Heart right ventricle (tissue), 16 donors: ENCODE measurements at regions of chr18 and their contacts with region 1.

Region 1: DNA sequence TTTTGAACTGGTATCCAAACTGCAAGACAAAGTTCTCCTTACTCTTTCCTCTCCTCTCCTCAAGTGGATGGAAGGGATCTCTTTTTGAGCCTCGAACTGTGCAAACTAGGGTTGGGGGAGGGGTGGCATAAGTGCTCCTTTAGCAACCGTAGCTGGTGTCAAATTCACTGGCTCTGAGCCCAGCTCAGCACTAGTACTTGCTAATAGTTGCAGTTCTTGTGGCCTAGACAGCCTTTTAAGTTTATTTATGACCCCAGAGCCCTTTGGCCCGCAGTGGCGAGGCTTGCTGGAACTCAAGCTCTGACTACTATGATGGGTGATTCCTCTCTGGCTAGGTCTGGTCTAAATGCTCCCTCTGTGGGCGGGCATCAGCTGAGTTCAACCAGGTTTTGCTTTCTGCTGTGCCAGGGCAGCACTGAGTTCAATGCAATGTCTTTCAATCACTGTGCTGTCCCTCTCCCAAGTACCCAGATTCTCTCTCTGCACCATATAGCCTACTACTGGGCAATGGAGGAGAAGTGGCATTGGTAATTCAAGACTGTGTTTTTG is 528.4 kb upstream of the SYT4 start:
- DNase-seq: no peak
- ATAC-seq: no peak
- H3K4me3 ChIP-seq: no peak overlapping the region
- H3K27ac ChIP-seq: no peak overlapping the region
- H3K4me1 ChIP-seq: no peaks in the 10 kb centered on the region
- H3K27me3 ChIP-seq: no peaks in the 10 kb centered on the region
- CTCF ChIP-seq: no peak

Region 2: DNA sequence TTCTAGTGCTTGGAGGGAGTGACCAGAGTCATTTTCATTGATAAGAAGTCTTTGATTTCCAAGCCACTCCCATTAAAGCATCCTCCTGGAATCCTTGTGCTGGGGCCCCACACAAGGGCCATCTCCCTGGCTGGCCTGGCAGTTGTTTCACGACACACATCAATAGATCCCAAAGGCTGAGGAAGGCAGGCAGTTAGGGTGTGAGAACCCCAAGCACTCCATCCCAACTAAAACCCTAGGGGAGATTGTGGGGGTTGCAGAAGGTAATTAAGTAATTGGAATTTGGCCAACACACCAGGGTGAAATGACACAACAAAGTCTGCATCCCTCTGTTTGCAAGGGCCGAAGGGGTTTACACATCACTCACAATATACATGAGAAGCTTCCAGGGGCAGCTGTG is 49.7 kb after region 1 on chr18:
- intact Hi-C with region 1: loop called in 2 of 10 experiments (anchors 10 kb)
- DNase-seq: no peak
- ATAC-seq: no peak
- H3K4me3 ChIP-seq: no peak overlapping the region
- H3K27ac ChIP-seq: no peak overlapping the region
- H3K4me1 ChIP-seq: no peaks in the 10 kb centered on the region
- H3K27me3 ChIP-seq: no peaks in the 10 kb centered on the region
- CTCF ChIP-seq: no peak

Region 3: DNA sequence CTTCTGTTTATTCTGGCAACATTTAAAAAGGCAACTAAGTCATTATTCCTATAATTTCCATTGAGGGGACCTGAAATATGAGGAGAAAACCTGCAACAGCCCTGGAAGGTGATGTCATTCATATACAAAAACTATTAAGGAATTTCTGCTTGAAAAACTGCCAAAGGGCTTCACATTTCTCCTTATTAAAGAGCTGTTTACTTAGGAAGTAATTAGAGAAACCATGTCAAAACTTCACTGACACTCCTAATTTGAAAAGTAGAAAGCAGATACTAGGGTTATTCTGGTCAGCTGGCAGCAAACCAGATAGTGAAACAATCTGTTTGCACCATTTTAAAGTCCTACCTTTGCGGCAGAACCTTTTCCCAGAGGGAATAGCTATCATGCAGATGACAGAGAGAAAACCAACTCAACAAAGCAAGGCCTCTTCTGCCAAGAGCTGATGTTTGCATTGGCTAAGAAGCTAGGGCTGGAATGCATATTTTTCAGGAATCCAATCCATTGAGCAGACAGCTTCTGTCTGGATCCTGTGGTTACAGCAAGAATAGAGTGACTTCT is 63.8 kb after region 1 on chr18:
- intact Hi-C with region 1: loop called in 1 of 10 experiments (anchors 10 kb)
- DNase-seq: no peak
- ATAC-seq: peak in 1 of 8 donors; percentile 37
- H3K4me3 ChIP-seq: no peak overlapping the region
- H3K27ac ChIP-seq: peak overlapping the region in 1 of 10 donors; percentile 2
- H3K4me1 ChIP-seq: peaks cover 0 to 12% (median 9%) of the 10 kb centered on the region in 9 donors
- H3K27me3 ChIP-seq: no peaks in the 10 kb centered on the region
- CTCF ChIP-seq: no peak